Aorta (tissue), 5 donors: ENCODE measurements at regions of chr1 and their contacts with region 1.

Region 1: DNA sequence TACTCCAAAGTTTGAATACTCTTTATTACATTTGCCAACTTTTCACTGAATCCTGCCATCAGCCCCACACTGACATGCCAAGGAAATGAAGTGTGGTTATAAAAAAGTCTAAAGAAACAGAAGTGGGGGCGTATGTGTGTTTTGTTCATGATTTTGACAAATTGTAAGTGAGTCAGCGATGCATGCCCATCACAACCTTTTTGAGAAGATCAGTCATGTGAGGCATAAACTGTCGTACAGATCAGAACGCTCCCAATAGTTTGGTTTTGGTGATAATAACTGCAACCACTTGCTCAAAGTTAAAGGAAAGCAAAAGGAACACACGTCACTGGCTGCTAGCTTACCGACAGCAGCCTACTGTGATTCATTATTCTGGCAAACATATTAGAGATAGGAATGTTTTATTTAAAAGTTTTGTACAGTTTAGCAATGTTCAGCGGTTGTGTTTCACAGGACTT is 95.6 kb downstream of the RGS2 start:
- DNase-seq: no peak
- ATAC-seq: peak; percentile 79
- H3K4me3 ChIP-seq: peak overlapping the region; percentile 34 to 40
- H3K27ac ChIP-seq: peak overlapping the region; percentile 63 to 76
- H3K4me1 ChIP-seq: peaks cover 0 to 1% of the 10 kb centered on the region in 2 donors
- H3K27me3 ChIP-seq: no peaks in the 10 kb centered on the region

Region 2: GRCh38 chr1:192626366-192627179 is 277.9 kb before region 1 on chr1:
- intact Hi-C with region 1: loop called in 1 of 2 experiments (anchors 5 kb)
- DNase-seq: no peak
- ATAC-seq: no peak
- H3K4me3 ChIP-seq: no peak overlapping the region
- H3K27ac ChIP-seq: no peak overlapping the region
- H3K4me1 ChIP-seq: peaks cover 2% of the 10 kb centered on the region in 2 donors
- H3K27me3 ChIP-seq: no peaks in the 10 kb centered on the region

Region 3: DNA sequence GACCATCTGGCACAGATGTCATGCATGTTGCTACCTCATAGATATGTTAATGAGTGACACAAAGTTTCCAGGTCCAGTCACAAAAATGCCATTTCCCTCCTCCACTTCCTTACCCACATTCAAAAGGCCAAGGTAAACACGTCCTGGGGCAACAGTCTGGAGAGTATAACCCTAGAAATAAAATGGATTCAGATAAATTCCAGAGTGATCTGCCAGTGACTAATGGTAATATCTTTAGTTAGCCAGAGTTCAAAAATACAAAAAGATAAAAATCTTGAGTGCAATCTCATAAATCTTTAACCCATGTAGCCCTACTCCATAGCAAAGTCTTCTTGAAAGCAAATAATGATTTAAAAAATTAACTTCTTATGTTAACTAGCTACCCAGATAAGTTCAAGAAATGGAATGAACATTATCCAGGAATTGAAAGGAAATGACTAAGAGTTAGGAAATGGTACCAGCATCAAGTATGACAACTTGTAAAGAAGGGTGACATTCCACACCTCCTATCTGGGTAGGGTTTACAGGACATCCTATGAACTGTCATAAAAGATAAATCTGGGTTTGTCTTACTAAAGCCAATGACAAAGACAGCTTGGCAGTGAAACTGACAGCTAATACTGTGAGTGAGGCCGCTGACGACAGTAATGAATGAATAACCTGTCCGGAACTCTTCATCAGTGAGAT is 77.5 kb before region 1 on chr1:
- intact Hi-C with region 1: loop called in 1 of 2 experiments (anchors 5 kb)
- DNase-seq: no peak
- ATAC-seq: no peak
- H3K4me3 ChIP-seq: no peak overlapping the region
- H3K27ac ChIP-seq: peak overlapping the region in 1 of 2 donors; percentile 86
- H3K4me1 ChIP-seq: peaks cover 0 to 5% of the 10 kb centered on the region in 2 donors
- H3K27me3 ChIP-seq: no peaks in the 10 kb centered on the region

Region 4: GRCh38 chr1:193009501-193009900 is 105.0 kb after region 1 on chr1:
- intact Hi-C with region 1: no loop called
- DNase-seq: no peak
- ATAC-seq: no peak
- H3K4me3 ChIP-seq: no peak overlapping the region
- H3K27ac ChIP-seq: no peak overlapping the region
- H3K4me1 ChIP-seq: peaks cover 0 to 3% of the 10 kb centered on the region in 2 donors
- H3K27me3 ChIP-seq: no peaks in the 10 kb centered on the region

Region 5: GRCh38 chr1:193070942-193071341 is 166.5 kb after region 1 on chr1:
- intact Hi-C with region 1: no loop called
- DNase-seq: no peak
- ATAC-seq: no peak
- H3K4me3 ChIP-seq: no peak overlapping the region
- H3K27ac ChIP-seq: no peak overlapping the region
- H3K4me1 ChIP-seq: peaks cover 0 to 2% of the 10 kb centered on the region in 2 donors
- H3K27me3 ChIP-seq: no peaks in the 10 kb centered on the region